ENCODE measurements at regions of chr17 and their contacts with region 1.

Region 1: GRCh38 chr17:45247429-45248131 is 14.3 kb downstream of the SPATA32 start:
- DNase-seq: peak; percentile 98
- ATAC-seq: peak; percentile 81
- H3K4me3 Mint-ChIP-seq: peak overlapping the region; percentile 92
- H3K27ac Mint-ChIP-seq: peak overlapping the region; percentile 97
- H3K4me1 Mint-ChIP-seq: peaks cover 47% of the 10 kb centered on the region
- H3K27me3 Mint-ChIP-seq: no peaks in the 10 kb centered on the region

Region 2: DNA sequence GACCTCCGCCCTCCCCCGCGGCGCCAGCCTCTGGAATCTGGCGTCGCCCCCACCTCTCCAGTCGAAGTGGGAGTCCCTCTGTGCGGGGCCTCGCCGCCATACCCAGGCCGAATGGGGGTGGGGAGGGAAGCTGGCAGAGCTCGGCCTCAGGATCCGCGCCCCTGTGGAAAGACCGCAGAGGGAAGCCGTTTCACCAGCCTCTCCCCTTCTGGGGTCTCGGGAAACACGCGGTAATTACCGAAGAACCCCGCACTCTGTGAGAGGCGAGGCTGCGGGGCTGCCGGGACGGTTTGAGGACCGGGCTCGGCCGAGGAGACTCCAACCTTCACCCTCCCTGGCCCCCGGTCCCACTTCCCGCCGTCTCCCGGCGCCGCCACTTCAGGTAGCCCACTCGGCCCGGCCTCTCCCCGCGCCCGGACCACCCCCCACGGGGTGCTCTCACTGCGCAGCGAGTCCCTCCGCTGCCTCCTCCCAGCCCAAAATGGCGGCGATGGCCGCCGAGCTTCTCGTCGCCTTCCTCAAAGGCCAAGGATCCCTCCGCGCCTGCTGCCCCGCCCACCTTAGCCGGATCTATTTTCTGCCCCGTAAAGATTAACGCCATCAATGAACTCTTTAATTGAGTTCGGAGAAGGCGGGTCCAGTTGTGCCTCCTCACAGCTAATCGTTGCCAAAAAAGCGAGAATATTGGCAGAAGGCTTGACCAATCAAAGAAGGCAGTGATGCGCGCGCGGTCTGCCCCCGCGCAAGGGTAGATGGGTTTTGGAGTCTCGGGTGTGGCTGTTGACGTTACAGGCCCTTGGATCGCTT is 86.4 kb before region 1 on chr17:
- POLR2A ChIA-PET with region 1: interaction called, 11 read pairs
- DNase-seq: peak; percentile 96
- ATAC-seq: peak; percentile 97
- H3K4me3 Mint-ChIP-seq: peak overlapping the region; percentile 99
- H3K27ac Mint-ChIP-seq: peak overlapping the region; percentile 99
- H3K4me1 Mint-ChIP-seq: peaks cover 36% of the 10 kb centered on the region
- H3K27me3 Mint-ChIP-seq: no peaks in the 10 kb centered on the region

Region 3: DNA sequence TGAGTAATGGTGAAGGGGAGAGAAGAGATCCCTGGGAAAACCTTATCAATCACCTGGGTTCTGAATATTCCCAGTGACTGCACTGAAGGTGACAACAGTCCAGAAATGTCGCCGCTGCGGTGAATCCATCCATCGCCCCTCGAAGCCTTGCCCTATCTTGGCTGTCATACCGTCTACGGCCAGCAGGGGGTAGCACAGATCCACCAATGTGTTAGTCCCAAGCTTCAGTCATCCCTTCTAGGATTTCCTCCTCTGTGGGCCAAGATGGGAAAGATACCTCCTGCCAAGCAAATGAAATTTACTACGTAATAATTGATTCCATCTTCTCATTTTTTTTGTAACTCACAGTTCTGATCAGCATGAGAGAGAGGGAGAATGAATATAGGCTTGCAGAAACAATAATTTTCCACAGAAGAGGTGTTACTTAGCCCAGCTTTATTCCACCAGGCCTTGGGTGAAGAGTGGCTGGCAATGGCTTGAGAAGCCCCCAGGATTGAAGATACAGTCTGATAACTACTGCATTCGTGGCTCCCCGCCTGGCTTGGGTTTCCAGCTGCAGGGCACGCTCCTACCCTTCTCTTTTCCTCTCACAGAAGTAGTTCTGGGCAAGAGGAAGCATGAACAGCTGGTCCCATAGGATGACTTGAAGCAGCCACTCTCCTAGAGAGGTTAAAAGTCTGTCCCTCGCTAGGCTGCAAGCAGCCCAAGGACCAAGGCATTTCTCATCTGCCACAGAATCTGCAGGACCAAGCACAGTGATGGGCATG is 28.5 kb before region 1 on chr17:
- POLR2A ChIA-PET with region 1: interaction called, 187 read pairs
- DNase-seq: peak; percentile 88
- ATAC-seq: no peak
- H3K4me3 Mint-ChIP-seq: peak overlapping the region; percentile 95
- H3K27ac Mint-ChIP-seq: peak overlapping the region; percentile 62
- H3K4me1 Mint-ChIP-seq: peaks cover 33% of the 10 kb centered on the region
- H3K27me3 Mint-ChIP-seq: no peaks in the 10 kb centered on the region

Region 4: DNA sequence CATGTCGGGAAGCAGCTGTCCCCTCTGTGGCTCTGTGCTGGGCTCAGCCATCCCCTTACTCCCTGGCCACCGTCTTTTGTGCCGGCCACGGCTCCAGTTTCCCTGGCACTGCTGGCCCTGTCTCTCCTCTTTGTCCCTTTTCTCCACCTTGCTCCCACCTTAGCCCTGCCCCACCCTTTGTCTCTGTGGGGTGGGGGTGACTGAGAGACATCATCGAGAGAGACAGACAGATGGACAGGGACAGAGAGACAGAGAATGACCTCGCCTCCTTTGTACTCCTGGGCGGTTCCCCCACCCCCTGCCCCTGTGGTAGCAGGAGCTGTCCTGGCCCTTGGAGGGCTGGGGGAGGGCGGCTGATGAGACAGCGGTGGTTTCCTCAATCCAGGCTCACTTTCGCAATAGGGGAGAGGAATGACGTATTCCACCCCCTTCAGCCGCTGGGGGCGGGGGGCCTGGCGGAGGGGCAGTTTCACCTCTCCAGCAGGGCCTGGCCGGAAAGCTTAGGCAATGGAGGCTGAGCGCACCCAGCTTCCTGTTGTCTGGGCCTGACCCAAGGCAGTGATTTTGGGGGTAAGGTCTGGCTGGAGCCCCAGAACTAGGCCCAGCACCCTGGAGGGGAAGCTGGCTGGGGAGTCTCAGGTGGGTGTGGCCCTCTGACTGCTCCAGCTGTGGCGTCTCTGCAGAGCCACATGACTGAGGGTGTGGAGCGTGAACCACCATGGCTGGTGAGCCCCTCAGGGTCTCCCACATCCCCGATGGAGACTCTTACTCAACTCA is 18.6 kb before region 1 on chr17:
- POLR2A ChIA-PET with region 1: interaction called, 187 read pairs
- DNase-seq: peak; percentile 76
- ATAC-seq: peak; percentile 33
- H3K4me3 Mint-ChIP-seq: peak overlapping the region; percentile 100
- H3K27ac Mint-ChIP-seq: peak overlapping the region; percentile 99
- H3K4me1 Mint-ChIP-seq: peaks cover 69% of the 10 kb centered on the region
- H3K27me3 Mint-ChIP-seq: no peaks in the 10 kb centered on the region

Region 5: DNA sequence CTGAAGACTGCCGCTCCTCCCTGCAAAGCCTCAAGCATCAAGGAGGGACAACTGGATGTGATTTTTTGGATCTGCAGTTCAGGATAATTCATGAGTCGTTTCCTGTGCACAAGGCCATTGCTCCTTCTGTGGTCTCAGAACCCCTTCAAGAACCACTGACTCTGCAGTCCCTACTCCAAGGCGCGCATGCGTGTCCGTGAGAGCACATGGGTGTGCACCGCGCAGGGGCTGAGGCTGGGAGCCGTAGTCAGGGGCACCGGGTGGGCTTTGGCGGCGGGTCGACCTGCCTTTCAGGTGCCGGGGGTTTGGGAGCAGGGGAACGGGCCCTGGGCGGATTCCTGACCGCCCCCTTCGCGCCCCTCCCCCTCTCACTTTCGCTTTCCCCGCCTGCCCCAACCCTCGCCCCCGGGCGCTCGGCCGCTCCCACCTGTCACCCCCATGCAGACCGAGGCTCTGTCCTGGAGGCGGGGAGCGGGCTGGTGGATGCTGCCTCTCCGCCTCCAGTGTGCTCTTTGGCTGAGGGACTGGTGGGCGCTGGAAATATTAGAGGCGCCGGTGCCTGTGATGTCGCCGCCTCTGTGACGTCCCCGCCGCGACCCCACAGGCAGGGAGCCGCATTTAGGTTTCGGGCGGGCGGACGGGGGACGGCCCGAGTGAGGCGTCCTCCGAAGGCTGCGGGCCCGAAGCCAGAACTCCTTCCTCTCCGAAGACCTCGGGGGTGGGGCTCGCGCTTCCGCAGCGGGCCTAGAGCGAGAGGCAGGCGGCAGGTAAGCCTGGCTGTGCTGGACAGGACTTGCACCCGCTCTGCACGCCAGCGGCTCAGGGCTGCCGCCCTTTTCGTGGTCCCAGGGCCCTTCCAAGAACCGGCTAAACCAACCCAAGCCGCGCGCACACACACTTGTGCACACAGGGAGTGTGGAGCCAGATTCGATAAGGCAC is 14.3 kb after region 1 on chr17 and contains the start of gene SPATA32:
- POLR2A ChIA-PET with region 1: interaction called, 34 read pairs
- DNase-seq: peak; percentile 84
- ATAC-seq: peak; percentile 91
- H3K4me3 Mint-ChIP-seq: peak within 1 kb of the TSS; percentile 85
- H3K27ac Mint-ChIP-seq: peak within 1 kb of the TSS; percentile 92
- H3K4me1 Mint-ChIP-seq: peaks cover 21% of the 10 kb centered on the region
- H3K27me3 Mint-ChIP-seq: no peaks in the 10 kb centered on the region
- total RNA-seq, gene SPATA32: 0.53 to 0.65 TPM

Region 6: DNA sequence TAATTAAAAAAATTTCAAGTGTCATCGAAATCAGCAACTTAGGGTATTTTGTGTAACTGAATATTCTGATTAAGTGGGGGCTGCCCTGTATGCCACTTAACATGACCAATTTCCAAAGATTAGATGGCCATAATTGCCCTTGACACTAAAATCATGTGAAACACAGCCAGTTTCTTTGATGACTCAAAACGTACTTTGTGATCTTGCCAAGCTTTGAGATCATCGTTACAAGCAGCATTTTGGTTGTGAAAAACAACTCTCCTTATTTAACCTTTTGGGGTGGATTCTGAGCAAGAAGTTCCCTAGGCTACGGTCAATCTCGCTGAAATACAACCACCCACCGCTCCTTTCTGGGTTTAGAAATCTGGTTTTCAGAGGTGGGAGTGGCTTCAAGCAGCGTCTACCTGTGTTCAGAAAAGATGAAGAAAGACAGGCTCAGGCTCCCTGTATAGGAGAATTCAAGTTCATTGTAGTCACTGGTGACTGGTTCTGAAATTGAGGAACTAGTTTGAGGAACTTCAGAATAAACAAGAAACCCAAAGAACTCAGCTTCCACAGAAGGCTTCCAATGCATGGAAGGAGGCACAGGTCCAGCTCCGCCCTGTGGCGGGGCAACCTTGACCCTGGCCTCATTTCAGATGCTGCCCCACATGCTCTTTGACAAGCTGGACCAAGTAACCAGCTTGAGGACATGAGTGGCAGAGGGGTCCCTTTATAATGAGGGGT is 59.9 kb after region 1 on chr17:
- POLR2A ChIA-PET with region 1: interaction called, 15 read pairs
- DNase-seq: no peak
- ATAC-seq: peak; percentile 6
- H3K4me3 Mint-ChIP-seq: peak overlapping the region; percentile 51
- H3K27ac Mint-ChIP-seq: peak overlapping the region; percentile 77
- H3K4me1 Mint-ChIP-seq: peaks cover 67% of the 10 kb centered on the region
- H3K27me3 Mint-ChIP-seq: no peaks in the 10 kb centered on the region

Region 7: DNA sequence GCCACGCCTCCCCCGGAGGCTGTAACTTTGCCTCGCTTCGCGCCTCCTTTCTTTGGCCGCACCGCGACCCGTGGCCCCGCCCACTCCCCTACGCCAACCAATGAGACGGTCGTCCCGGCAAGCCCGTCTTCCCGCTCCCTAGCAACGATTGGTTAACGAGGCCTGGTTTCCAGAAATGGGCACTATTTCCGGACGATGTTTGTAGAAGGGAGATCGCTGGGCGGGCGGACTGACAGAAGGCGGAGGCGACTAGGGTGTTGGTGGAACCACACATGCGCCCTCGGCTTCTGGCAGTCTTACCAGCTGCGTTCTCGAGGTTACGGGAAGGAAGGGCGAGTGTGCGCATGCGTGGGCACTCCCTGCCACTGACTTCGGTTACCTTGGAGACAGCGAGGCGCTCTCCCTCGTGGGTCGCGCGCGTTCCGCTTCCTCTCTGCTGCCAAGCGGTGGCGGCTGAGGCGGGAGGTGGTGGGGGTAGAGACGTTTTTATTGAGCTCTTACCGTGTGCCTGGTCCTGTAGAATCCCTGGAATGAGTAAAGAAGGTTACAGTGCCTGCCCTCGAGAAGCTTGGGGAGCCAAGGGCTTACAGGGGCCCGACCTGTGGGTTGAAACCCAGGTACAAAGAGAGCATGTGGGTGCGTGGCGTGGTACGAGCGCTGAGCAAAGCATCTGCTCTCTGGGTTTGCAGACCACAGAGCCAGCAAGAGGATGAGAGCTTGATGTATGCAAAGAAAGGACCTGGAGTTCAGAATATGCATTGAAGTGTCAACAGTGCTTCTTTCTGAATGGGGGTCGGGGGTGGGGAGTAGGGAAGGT is 69.7 kb after region 1 on chr17:
- POLR2A ChIA-PET with region 1: interaction called, 33 read pairs
- DNase-seq: peak; percentile 99
- ATAC-seq: peak; percentile 87
- H3K4me3 Mint-ChIP-seq: peak overlapping the region; percentile 88
- H3K27ac Mint-ChIP-seq: peak overlapping the region; percentile 84
- H3K4me1 Mint-ChIP-seq: peaks cover 62% of the 10 kb centered on the region
- H3K27me3 Mint-ChIP-seq: no peaks in the 10 kb centered on the region

Measured in activated naive CD8-positive, alpha-beta T cell treated with anti-CD3 and anti-CD28 coated beads, Interleukin-2, amount 10 ng/mL, durations not matched to agents 7 days and 5 days (primary cell).